ENCODE measurements at regions of chr10 and their contacts with region 1.

Region 1: GRCh38 chr10:613271-614138 is 76.0 kb downstream of the DIP2C start:
- DNase-seq: peak; percentile 68
- H3K4me3 ChIP-seq: no peak overlapping the region
- H3K27ac ChIP-seq: peak overlapping the region; percentile 59 to 79 (median 75)
- H3K4me1 ChIP-seq: peaks cover 0 to 96% (median 89%) of the 10 kb centered on the region in 4 donors
- H3K27me3 ChIP-seq: no peaks in the 10 kb centered on the region
- CTCF ChIP-seq: no peak
- EP300 ChIP-seq: no peak
- POLR2A ChIP-seq: no peak

Region 2: DNA sequence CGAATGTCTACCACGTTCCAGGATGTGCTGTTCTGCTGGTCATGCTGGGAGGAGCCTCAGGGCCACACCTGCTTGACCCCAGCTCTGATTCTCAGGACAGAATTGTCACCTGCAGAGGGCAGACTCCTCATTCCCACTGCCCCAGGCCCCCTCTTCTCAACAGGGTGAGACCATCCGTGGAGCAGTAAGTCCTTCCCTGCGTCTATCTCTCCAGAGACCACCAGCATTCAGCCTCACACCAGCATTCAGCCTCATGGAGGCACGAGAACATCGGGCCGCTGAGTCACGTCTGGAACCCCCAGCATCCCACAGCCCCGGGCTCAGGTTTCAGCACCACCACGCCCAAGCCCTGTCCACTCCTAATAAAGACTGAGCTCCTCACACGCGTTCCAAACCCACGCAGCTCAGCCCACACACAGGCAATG is 197.4 kb before region 1 on chr10:
- intact Hi-C with region 1: no loop called
- DNase-seq: no peak
- H3K4me3 ChIP-seq: no peak overlapping the region
- H3K27ac ChIP-seq: no peak overlapping the region
- H3K4me1 ChIP-seq: peaks cover 0 to 2% (median 0%) of the 10 kb centered on the region in 4 donors
- H3K27me3 ChIP-seq: no peaks in the 10 kb centered on the region
- CTCF ChIP-seq: no peak
- EP300 ChIP-seq: no peak
- POLR2A ChIP-seq: no peak

Region 3: DNA sequence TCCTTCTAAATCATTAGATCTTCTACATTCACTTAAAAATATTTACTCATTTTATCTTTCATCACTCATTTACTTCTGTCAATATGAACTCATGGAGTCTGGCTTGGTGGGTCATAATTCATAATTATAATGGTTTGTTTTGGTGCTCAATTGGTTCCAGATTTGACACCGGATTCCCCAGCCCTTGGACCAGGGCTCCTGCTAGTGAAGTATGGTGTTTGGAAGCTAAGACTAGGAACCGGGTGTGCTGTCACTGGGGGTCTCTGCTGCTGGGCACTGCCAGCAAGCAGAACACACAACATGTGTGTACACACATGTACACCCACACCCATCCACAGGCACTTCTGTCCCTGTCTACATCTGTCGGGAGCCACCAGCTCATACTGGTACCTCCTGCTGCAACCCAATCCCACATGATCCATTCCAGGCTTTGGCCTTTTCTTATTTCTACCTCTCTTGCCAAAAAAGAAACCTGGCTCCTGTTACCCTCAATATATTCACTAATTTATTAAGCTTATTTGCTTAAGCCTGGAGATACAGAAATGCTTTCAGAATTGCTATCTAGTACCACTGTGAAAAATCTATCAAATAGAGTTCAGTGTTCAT is 170.1 kb before region 1 on chr10:
- intact Hi-C with region 1: no loop called
- DNase-seq: no peak
- H3K4me3 ChIP-seq: no peak overlapping the region
- H3K27ac ChIP-seq: no peak overlapping the region
- H3K4me1 ChIP-seq: no peaks in the 10 kb centered on the region
- H3K27me3 ChIP-seq: no peaks in the 10 kb centered on the region
- CTCF ChIP-seq: no peak
- EP300 ChIP-seq: no peak
- POLR2A ChIP-seq: no peak

Region 4: GRCh38 chr10:624605-625332 is 11.3 kb after region 1 on chr10:
- intact Hi-C with region 1: loop called (anchors 1 kb)
- DNase-seq: peak; percentile 90
- H3K4me3 ChIP-seq: peak overlapping the region in 3 of 4 donors; percentile 13 to 32 (median 29)
- H3K27ac ChIP-seq: peak overlapping the region; percentile 88 to 93 (median 89)
- H3K4me1 ChIP-seq: peaks cover 0 to 79% (median 73%) of the 10 kb centered on the region in 4 donors
- H3K27me3 ChIP-seq: no peaks in the 10 kb centered on the region
- CTCF ChIP-seq: no peak
- EP300 ChIP-seq: peak in 3 of 4 donors; percentile 65 to 95 (median 92)
- POLR2A ChIP-seq: no peak

Region 5: GRCh38 chr10:683448-684071 is 70.1 kb after region 1 on chr10:
- intact Hi-C with region 1: loop called (anchors 5 kb)
- DNase-seq: peak; percentile 91
- H3K4me3 ChIP-seq: peak overlapping the region in 3 of 4 donors; percentile 26 to 32 (median 31)
- H3K27ac ChIP-seq: peak overlapping the region; percentile 77 to 99 (median 92)
- H3K4me1 ChIP-seq: peaks cover 0 to 81% (median 65%) of the 10 kb centered on the region in 4 donors
- H3K27me3 ChIP-seq: no peaks in the 10 kb centered on the region
- CTCF ChIP-seq: no peak
- EP300 ChIP-seq: peak in 3 of 4 donors; percentile 91 to 94 (median 92)
- POLR2A ChIP-seq: peak in 1 of 2 donors; percentile 30

Measured in sigmoid colon (tissue), 7 donors.